Sigmoid colon (tissue), 7 donors: ENCODE measurements at regions of chr11 and their contacts with region 1.

Region 1: GRCh38 chr11:1628506-1629325 is 859 bp upstream of the KRTAP5-5 start:
- DNase-seq: peak; percentile 60
- H3K4me3 ChIP-seq: no peak overlapping the region
- H3K27ac ChIP-seq: no peak overlapping the region
- H3K4me1 ChIP-seq: no peaks in the 10 kb centered on the region
- H3K27me3 ChIP-seq: peaks cover 0 to 41% (median 22%) of the 10 kb centered on the region in 3 donors
- CTCF ChIP-seq: peak; percentile 60 to 83 (median 67)
- EP300 ChIP-seq: no peak
- POLR2A ChIP-seq: no peak

Region 2: DNA sequence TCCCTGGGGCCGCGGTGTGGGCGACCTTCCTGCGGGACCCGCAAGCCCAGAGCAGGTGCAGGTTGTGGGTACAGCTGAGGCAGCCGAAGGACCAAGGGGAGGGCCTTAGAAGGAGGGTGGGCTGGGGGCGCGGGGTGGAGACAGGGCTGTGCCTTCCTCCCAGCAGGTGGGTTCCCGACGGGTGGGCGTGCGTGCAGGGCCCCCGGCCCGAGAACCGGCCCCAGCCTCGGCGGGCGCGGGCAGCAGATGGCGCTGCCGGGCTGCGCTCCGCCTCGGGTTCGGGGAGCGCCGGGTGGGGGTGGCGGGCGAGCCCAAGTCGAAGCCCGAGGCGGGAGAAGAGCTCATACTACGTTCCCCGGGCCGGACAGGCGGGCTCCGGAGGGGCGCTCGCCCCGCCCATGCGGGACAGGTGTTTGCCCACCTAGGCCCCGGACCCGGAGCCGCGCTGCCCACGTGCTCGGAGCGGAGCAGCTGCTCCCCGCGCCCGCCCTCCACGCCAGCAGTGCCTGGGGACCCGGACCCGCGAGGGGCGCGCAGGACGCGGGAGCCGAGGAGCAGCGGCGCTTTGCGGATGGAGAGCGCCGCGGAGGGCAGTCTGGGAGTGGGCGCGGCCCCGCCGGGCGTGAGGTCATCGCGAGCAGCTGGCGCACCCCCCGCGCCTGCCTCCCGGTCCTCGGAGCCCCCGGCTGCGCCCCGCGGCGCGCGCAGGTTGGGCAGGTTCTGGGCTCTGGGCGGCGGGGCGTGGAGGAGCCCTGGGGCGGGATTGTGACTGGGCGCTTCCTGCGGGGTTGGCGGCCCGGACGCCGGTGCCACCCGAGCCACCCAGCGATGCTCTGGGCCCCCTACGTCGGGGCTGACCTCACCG is 81.9 kb before region 1 on chr11:
- intact Hi-C with region 1: loop called (anchors 2 kb)
- DNase-seq: no peak
- H3K4me3 ChIP-seq: peak overlapping the region in 3 of 4 donors; percentile 39 to 51 (median 42)
- H3K27ac ChIP-seq: peak overlapping the region in 3 of 4 donors; percentile 54 to 79 (median 72)
- H3K4me1 ChIP-seq: peaks cover 0 to 31% (median 27%) of the 10 kb centered on the region in 4 donors
- H3K27me3 ChIP-seq: peaks cover 7 to 29% (median 23%) of the 10 kb centered on the region in 3 donors
- CTCF ChIP-seq: peak; percentile 50 to 87 (median 61)
- EP300 ChIP-seq: no peak
- POLR2A ChIP-seq: no peak